Dorsolateral prefrontal cortex (tissue), 120 donors: ENCODE measurements at regions of chr15 and their contacts with region 1.

Region 1: GRCh38 chr15:74438721-74439316 is 5.1 kb upstream of the SEMA7A start:
- DNase-seq: peak; percentile 78 to 89 (median 84)
- H3K4me3 ChIP-seq: no peak overlapping the region
- H3K27ac ChIP-seq: peak overlapping the region in 6 of 59 donors; percentile 3 to 61 (median 24)
- H3K27me3 ChIP-seq: no peaks in the 10 kb centered on the region
- CTCF ChIP-seq: peak; percentile 66 to 100 (median 97)

Region 2: GRCh38 chr15:74382004-74382816 is 56.6 kb before region 1 on chr15:
- intact Hi-C with region 1: loop called (anchors 1 kb)
- DNase-seq: peak; percentile 85 to 95 (median 91)
- H3K4me3 ChIP-seq: no peak overlapping the region
- H3K27ac ChIP-seq: peak overlapping the region in 12 of 59 donors; percentile 2 to 65 (median 28)
- H3K27me3 ChIP-seq: no peaks in the 10 kb centered on the region
- CTCF ChIP-seq: peak; percentile 74 to 100 (median 98)

Region 3: GRCh38 chr15:74620636-74621545 is 182.1 kb after region 1 on chr15:
- intact Hi-C with region 1: loop called in 1 of 2 experiments (anchors 5 kb)
- DNase-seq: peak; percentile 50 to 84 (median 74)
- H3K4me3 ChIP-seq: peak overlapping the region in 26 of 59 donors; percentile 1 to 43 (median 21)
- H3K27ac ChIP-seq: peak overlapping the region in 37 of 59 donors; percentile 3 to 76 (median 54)
- H3K27me3 ChIP-seq: no peaks in the 10 kb centered on the region
- CTCF ChIP-seq: peak; percentile 37 to 90 (median 79)